Testis (tissue), 5 donors: ENCODE measurements at regions of chr11 and their contacts with region 1.

Region 1: GRCh38 chr11:47454180-47454644 is 5.3 kb upstream of the RAPSN start:
- DNase-seq: peak; percentile 86
- H3K4me3 ChIP-seq: no peak overlapping the region
- H3K27ac ChIP-seq: no peak overlapping the region
- H3K4me1 ChIP-seq: peaks cover 6% of the 10 kb centered on the region
- H3K27me3 ChIP-seq: no peaks in the 10 kb centered on the region
- CTCF ChIP-seq: peak; percentile 48 to 56 (median 54)
- POLR2A ChIP-seq: no peak

Region 2: GRCh38 chr11:47355283-47356128 is 98.7 kb before region 1 on chr11:
- intact Hi-C with region 1: no loop called
- DNase-seq: peak; percentile 98
- H3K4me3 ChIP-seq: peak overlapping the region; percentile 48 to 56
- H3K27ac ChIP-seq: peak overlapping the region in 1 of 2 donors; percentile 66
- H3K4me1 ChIP-seq: peaks cover 6% of the 10 kb centered on the region
- H3K27me3 ChIP-seq: no peaks in the 10 kb centered on the region
- CTCF ChIP-seq: peak; percentile 83 to 95 (median 86)
- POLR2A ChIP-seq: no peak

Region 3: DNA sequence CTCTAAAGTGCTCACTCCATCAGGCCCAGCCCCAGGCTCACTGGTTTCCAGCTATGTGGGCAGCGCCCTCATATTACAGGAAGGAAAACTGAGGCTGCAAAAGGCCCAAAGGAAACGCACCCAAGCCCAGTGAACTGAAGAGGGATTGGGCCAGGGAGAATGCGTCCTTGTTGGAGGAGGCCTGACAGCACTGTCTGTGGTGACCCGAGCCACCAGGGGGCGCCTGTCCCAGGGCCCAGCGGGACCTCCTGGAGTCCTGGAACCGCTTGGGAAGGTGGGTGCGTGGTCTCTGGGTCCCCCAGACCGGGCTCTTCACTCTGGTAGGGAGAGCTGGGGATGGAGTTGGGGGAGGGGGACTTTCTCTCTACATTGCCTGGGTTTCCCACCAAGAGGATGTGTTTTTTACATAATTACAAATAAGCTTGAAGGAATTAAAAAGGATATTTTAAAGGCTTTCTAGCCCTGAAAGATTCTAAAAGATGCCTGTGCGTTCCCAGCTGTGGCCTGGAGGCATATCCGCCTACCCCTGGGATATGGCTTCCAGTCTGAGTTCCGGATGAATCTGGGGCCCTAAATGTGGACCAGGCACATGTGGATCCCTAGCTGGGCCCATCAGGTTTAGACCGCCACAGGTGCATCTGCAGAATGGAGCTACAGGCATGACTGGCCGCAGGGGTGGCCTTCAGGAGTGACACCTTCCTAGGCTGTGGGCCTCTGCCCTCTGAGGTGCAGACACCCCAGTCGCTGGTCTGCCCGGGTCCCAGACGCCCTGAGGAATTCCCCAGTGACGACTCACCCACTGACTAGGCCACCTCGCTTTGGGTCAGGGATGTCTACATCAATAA is 80.1 kb before region 1 on chr11:
- intact Hi-C with region 1: loop called (anchors 10 kb)
- DNase-seq: peak; percentile 89
- H3K4me3 ChIP-seq: no peak overlapping the region
- H3K27ac ChIP-seq: no peak overlapping the region
- H3K4me1 ChIP-seq: no peaks in the 10 kb centered on the region
- H3K27me3 ChIP-seq: no peaks in the 10 kb centered on the region
- CTCF ChIP-seq: peak; percentile 78 to 89 (median 88)
- POLR2A ChIP-seq: no peak

Region 4: DNA sequence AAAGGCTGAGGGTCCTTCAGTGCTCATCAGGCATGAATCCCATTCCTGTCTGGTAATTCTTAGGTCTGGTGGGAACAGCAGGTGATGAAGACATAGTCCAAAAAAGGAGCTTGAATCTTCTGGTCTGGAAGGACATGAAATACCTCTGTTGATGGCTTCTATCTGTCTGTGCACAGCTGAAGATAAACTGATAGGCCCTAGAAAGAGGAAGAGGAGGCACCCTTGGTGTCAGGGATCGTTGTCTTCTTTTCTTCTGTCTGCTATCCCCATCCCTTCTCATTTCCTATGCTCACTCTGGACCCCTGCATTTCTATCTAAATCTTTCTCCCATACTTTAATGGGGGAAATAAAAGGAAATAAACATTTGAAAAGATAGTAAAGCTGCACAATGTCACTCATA is 251.5 kb after region 1 on chr11:
- intact Hi-C with region 1: no loop called
- DNase-seq: no peak
- H3K4me3 ChIP-seq: no peak overlapping the region
- H3K27ac ChIP-seq: no peak overlapping the region
- H3K4me1 ChIP-seq: no peaks in the 10 kb centered on the region
- H3K27me3 ChIP-seq: no peaks in the 10 kb centered on the region
- CTCF ChIP-seq: no peak
- POLR2A ChIP-seq: no peak